ENCODE measurements at regions of chrX and their contacts with region 1.

Region 1: GRCh38 chrX:119516157-119516702 is 48.0 kb downstream of the SLC25A5 start:
- DNase-seq: peak; percentile 76
- H3K4me3 ChIP-seq: no peak overlapping the region
- H3K27ac ChIP-seq: no peak overlapping the region
- H3K4me1 ChIP-seq: no peaks in the 10 kb centered on the region
- H3K27me3 ChIP-seq: no peaks in the 10 kb centered on the region
- CTCF ChIP-seq: peak; percentile 87

Region 2: DNA sequence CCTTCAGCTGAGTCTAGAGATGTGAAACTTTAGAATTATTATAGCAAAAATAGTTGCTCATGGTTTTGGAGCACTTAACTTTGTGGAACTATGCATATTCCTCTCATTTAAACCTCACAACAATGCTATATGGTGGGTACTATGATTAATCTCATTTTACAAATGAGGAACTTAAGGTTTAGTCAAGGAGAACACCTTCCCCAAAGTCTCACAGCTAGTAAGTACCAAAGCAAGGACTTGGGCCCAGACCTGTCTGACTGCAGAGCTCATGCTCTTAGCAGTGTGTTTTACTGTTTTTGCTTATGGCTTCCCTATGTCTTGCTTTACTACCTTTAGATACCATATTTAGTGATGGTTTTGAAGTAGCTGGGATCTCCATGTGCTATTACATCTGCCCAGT is 63.2 kb after region 1 on chrX:
- CTCF ChIA-PET with region 1: no interaction called
- POLR2A ChIA-PET with region 1: no interaction called
- intact Hi-C with region 1: no loop called
- DNase-seq: no peak
- H3K4me3 ChIP-seq: no peak overlapping the region
- H3K27ac ChIP-seq: no peak overlapping the region
- H3K4me1 ChIP-seq: peaks cover 5% of the 10 kb centered on the region
- H3K27me3 ChIP-seq: no peaks in the 10 kb centered on the region
- CTCF ChIP-seq: no peak

Region 3: GRCh38 chrX:119589810-119590209 is 73.6 kb after region 1 on chrX:
- CTCF ChIA-PET with region 1: no interaction called
- POLR2A ChIA-PET with region 1: no interaction called
- intact Hi-C with region 1: loop called (anchors 5 kb)
- DNase-seq: no peak
- H3K4me3 ChIP-seq: no peak overlapping the region
- H3K27ac ChIP-seq: no peak overlapping the region
- H3K4me1 ChIP-seq: no peaks in the 10 kb centered on the region
- H3K27me3 ChIP-seq: no peaks in the 10 kb centered on the region
- CTCF ChIP-seq: no peak

Region 4: DNA sequence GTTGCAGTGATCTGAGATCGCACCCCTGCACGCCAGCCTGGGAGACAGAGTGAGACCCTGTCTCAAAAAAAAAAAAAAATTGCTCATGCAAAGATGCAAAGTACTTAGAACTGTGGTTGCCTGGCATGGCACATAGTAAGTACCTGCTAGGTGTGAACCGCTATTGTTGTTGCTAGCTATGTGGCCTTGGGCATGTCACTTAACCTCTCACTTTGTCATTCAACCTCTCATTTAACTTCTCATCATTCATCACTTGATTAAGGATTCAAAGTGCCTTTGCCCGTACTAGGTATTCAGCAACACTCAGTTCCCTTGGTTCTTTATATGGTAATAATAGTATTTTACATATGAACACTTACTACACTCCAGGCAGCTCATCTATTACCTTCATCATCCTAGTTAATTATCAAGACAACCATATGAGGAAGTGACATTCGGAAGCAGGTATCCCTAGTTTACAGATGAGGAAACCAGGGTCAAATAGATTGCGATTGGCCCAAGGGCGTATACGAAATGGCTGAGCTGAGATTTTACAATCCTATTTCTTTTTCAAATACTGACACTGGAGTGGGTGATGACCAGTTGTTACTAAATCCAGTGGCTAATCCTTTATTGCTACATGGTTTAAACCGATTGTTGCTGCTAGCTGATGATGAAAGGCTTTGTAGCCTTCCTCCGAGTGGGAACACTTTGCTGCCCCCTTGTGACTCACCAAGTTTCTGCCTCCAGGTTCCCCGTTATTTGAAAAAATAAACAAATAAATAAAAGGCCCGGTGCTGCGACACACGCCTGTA is 213.4 kb after region 1 on chrX:
- CTCF ChIA-PET with region 1: interaction called, 3 read pairs
- POLR2A ChIA-PET with region 1: no interaction called
- intact Hi-C with region 1: loop called (anchors 1 kb)
- DNase-seq: peak; percentile 75
- H3K4me3 ChIP-seq: no peak overlapping the region
- H3K27ac ChIP-seq: no peak overlapping the region
- H3K4me1 ChIP-seq: no peaks in the 10 kb centered on the region
- H3K27me3 ChIP-seq: no peaks in the 10 kb centered on the region
- CTCF ChIP-seq: peak; percentile 60

Region 5: DNA sequence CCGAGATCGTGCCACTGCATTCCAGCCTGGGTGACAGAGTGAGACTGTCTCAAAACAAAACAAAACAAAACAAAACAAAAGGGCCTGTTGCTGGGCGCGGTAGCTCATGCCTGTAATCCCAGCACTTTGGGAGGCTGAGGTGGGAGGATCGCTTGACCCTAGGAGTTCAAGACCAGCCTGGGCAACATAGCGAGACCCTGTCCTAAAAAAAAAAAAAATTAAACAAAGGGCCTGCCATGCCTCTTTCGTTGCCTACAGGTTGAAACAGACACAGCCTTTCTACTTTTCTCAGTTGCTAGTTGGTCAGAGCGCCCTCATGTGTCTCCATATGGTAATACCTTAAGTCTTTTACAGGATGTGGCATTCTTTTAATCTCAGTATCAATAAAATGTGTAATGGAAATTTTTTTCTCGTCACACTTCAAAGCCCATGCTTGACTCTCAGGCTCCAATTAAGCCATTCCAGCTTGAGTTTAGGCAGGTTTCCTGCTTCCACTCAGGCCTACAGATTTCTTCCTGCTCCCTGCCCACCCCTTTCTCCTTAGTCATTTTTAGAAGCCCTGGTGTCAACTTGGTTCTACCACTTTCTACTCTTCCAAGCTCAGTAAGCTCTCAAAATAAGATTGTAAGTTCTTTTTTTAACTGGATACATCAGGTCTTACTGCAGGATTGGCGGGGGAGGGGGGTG is 237.5 kb after region 1 on chrX:
- CTCF ChIA-PET with region 1: no interaction called
- POLR2A ChIA-PET with region 1: no interaction called
- intact Hi-C with region 1: loop called (anchors 1 kb)
- DNase-seq: peak; percentile 78
- H3K4me3 ChIP-seq: no peak overlapping the region
- H3K27ac ChIP-seq: no peak overlapping the region
- H3K4me1 ChIP-seq: no peaks in the 10 kb centered on the region
- H3K27me3 ChIP-seq: no peaks in the 10 kb centered on the region
- CTCF ChIP-seq: peak; percentile 63

Region 6: DNA sequence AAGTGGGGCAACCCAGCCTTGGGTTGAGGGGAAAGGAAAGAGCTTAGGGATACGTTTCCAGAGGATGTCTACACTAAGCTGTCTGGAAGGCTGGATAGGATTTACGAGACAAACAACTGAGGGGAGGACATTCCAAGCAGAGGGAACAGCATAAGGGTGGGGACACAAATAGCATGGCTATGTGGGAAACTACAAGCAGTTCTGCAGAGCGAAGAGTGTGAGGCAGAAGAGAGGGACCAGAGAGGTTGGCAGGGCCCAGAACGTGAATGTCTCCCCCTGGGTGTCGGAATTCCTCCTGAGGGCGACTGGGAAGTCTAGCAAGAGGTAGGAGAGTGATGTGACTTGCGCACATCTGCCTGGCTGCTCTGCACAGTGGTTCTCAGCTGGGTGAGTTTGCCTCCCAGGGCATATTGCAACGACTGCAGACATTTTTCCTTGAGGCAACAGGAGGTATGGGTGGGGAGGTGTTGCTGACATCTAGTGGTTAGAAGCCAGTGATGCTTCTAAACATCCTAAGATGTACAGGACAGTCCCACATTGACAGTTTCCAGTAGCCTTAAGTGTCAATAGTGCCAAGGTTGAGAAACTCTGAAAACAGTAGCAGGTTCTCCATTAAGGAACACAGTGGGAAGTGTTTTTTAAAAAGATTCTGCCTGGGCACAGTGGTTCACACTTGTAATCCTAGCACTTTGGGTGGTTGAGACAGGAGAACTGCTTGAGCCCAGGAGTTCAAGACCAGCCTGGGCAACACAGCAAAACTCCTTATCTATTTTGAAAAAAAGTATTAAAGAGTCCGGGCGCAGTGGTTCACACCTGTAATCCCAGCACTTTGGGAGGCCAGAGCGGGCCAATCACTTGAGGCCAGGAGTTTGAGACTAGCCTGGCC is 364.6 kb after region 1 on chrX:
- CTCF ChIA-PET with region 1: no interaction called
- POLR2A ChIA-PET with region 1: no interaction called
- intact Hi-C with region 1: loop called (anchors 2 kb)
- DNase-seq: peak; percentile 66
- H3K4me3 ChIP-seq: no peak overlapping the region
- H3K27ac ChIP-seq: no peak overlapping the region
- H3K4me1 ChIP-seq: no peaks in the 10 kb centered on the region
- H3K27me3 ChIP-seq: no peaks in the 10 kb centered on the region
- CTCF ChIP-seq: peak; percentile 69